ENCODE measurements at regions of chr9 and their contacts with region 1.

Region 1: DNA sequence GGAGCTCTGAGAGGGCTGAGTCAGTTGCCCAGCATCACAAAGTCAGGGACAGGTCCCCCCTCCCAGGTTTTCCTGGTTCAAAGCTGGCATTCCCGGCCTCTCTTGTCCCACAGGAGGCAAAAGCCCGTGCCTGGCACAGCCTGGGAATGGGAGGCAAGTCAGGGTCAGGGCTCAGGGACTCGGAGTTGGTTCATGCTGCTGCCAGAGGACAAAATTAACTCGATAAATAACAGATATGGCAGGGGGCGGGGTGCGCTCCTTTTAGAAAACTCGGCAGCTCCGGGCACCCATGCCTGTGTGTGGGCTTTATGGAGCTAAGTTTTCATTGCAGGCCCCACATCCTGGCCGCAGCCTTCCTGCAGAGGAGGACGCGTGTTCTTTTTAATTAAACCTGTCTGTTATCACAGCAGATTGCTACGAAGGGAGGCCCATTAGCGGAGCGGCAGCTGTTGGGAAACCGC is 62.8 kb upstream of the LMX1B start:
- DNase-seq: no peak
- H3K27ac ChIP-seq: no peak overlapping the region
- CTCF ChIP-seq: no peak

Region 2: DNA sequence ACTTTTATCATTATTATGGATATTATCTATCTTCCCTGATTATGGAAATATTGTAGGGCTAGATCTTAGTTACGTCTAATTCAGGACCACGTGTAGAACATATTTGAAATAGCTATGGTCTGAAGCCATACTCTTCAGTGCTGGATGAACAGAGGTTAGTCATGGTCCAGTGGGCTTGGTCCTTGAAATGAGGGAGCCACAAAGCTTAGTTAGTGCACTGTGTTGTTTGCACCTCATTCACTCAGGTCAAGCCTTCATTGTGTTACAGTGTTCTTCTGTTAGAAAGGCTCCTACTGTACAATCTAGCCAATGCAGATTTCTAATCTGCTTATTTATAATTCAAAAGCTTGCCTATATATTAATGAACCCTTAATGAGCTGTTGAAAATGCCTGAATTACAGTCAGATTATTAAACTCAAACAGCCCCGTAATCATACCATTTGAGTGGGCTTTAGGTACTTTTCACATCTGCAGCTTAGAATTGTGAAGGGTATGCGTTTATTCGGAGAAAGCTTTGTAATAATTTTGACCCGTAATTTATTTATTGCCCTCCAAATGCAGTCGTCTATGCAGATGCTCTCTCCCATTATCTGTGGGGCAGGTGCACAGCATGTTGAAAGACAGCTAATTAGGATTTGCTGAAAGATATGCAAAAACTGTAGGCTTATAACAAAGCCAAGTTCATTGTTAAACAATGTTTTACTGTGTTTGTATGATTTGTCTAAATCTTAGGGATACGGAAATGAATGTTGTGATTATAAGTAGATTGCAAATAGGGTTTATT is 638.9 kb before region 1 on chr9:
- CTCF ChIA-PET with region 1: no interaction called
- POLR2A ChIA-PET with region 1: no interaction called
- DNase-seq: no peak
- H3K27ac ChIP-seq: no peak overlapping the region
- CTCF ChIP-seq: no peak

Region 3: GRCh38 chr9:126490871-126491567 is 59.9 kb before region 1 on chr9:
- CTCF ChIA-PET with region 1: interaction called, 11 read pairs
- POLR2A ChIA-PET with region 1: no interaction called
- DNase-seq: peak; percentile 70
- H3K27ac ChIP-seq: no peak overlapping the region
- CTCF ChIP-seq: peak; percentile 99

Region 4: GRCh38 chr9:126506361-126506941 is 44.5 kb before region 1 on chr9:
- CTCF ChIA-PET with region 1: interaction called, 299 read pairs
- POLR2A ChIA-PET with region 1: interaction called, 10 read pairs
- DNase-seq: no peak
- H3K27ac ChIP-seq: no peak overlapping the region
- CTCF ChIP-seq: no peak

Measured in RWPE1 (cell line).